ENCODE measurements at regions of chr6 and their contacts with region 1.

Region 1: DNA sequence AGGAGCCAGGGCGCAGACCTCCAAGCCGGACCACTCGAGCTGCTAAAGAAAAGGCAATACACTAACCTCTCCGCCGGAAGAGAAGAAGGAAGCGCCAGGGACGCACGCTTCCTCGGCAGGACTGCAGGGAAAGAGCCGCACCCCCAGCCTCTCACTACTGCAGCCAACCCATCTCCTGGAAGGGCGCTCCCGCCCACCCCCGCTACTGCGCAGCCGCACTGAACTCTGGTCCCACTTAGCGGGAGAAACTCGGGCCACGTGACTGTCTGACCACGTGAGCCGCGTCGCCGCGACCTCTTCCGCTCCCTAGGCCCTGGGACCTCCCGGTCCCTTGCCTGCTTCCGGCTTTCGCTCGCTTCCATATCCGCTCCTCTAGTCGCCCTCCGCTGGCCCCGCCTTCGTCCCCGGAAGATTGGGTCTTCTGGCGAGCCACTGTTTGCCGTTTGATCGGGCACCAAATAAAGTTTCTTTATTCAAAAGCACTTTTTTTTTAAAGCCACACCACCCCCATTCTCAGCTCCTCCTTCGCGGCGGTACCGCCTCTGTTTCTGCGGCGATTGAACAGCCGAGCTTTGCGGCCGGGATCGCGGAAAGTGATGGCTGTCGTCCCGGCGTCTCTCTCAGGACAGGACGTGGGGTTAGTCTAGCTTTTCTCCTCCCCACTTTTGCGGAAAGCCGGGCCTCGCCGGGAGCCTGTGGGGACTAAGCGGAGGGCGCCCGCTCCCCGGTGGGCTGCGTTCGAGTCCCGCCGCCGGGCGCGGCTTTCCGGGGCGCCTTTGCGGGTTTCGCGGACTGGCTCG is at the start of gene RMND1:
- DNase-seq: peak; percentile 97
- H3K4me3 ChIP-seq: peak within 1 kb of the TSS; percentile 82 to 96
- H3K27ac ChIP-seq: peak within 1 kb of the TSS; percentile 87 to 96
- H3K4me1 ChIP-seq: peaks cover 7 to 8% of the 10 kb centered on the region in 2 experiments; a peak in 2 of 4 replicates
- H3K27me3 ChIP-seq: no peaks in the 10 kb centered on the region
- CTCF ChIP-seq: no peak
- EP300 ChIP-seq: peak; percentile 46 to 60; a peak in 2 of 4 replicates
- RAD21 ChIP-seq: no peak
- polyA plus RNA-seq, gene RMND1: 14.8 and 17.9 TPM in 2 replicates

Region 2: GRCh38 chr6:151390276-151391032 is 61.7 kb before region 1 on chr6:
- CTCF ChIA-PET with region 1: no interaction called
- POLR2A ChIA-PET with region 1: interaction called, 10 read pairs
- DNase-seq: peak; percentile 98
- H3K4me3 ChIP-seq: peak overlapping the region; percentile 86 to 92; a peak in 3 of 4 replicates
- H3K27ac ChIP-seq: peak overlapping the region; percentile 98 to 99
- H3K4me1 ChIP-seq: peaks cover 24 to 31% of the 10 kb centered on the region in 2 experiments
- H3K27me3 ChIP-seq: no peaks in the 10 kb centered on the region
- CTCF ChIP-seq: no peak
- EP300 ChIP-seq: no peak
- RAD21 ChIP-seq: no peak

Measured in SK-N-SH (cell line).